Naive thymus-derived CD8-positive, alpha-beta T cell (primary cell): ENCODE measurements at regions of chr3 and their contacts with region 1.

Region 1: DNA sequence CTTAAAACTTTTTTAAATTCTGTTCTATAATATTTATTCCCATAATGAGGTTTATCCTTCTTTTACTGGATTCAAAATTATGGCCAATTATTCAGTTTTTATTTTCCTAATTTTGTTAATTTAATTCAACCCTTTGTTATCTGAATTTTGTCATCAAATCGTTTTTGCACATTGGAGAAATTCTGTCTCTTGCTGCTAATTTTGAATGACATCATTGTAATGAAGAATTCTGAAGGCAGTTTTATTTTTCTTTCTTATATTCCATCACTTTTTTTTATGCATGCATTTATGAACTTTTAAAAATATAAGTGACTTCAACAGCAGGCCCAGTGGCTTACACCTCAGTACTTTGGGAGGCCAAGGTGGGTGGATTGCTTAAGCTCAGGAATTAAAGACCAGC is 124.4 kb upstream of the EOMES start:
- DNase-seq: no peak
- ATAC-seq: no peak
- H3K4me3 Mint-ChIP-seq: no peak overlapping the region
- H3K27ac Mint-ChIP-seq: no peak overlapping the region
- H3K4me1 Mint-ChIP-seq: peaks cover 20 to 39% (median 25%) of the 10 kb centered on the region in 4 donors
- H3K27me3 Mint-ChIP-seq: no peaks in the 10 kb centered on the region

Region 2: GRCh38 chr3:27905625-27906024 is 59.1 kb after region 1 on chr3:
- POLR2A ChIA-PET with region 1: interaction called, 11 read pairs
- DNase-seq: peak in 2 of 10 donors; percentile 10 to 38
- ATAC-seq: peak in 1 of 2 donors; percentile 30
- H3K4me3 Mint-ChIP-seq: peak overlapping the region in 2 of 10 donors; percentile 8 to 14
- H3K27ac Mint-ChIP-seq: peak overlapping the region in 4 of 10 donors; percentile 57 to 69 (median 61)
- H3K4me1 Mint-ChIP-seq: peaks cover 35 to 58% (median 46%) of the 10 kb centered on the region in 4 donors
- H3K27me3 Mint-ChIP-seq: no peaks in the 10 kb centered on the region